Right cardiac atrium (tissue), 5 donors: ENCODE measurements at regions of chr2 and their contacts with region 1.

Region 1: DNA sequence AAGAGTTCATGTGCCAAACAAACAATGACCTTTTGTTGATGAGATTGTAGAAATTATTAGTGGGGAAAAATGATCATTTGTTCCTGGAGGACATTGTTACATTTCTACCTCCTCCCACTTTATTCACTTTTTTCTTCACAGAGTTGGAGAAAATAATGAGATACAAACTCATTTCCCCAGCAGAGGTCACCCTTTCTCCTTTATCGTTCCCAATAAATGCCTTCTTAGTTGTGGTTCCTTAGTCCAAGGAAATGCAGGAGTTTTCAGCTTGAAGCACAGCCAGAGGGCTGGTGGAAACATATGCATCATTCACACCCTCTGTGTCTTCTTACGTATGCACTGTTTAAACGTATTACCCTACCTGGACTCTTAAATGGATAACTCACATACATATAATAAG is 108.8 kb downstream of the SLC4A3 start:
- DNase-seq: no peak
- ATAC-seq: peak; percentile 60 to 65
- H3K4me3 ChIP-seq: no peak overlapping the region
- H3K27ac ChIP-seq: no peak overlapping the region
- H3K4me1 ChIP-seq: no peaks in the 10 kb centered on the region
- H3K27me3 ChIP-seq: no peaks in the 10 kb centered on the region

Region 2: GRCh38 chr2:219829667-219830352 is 93.6 kb after region 1 on chr2:
- intact Hi-C with region 1: loop called in 3 of 4 experiments (anchors 5 to 10 kb)
- DNase-seq: no peak
- ATAC-seq: no peak
- H3K4me3 ChIP-seq: no peak overlapping the region
- H3K27ac ChIP-seq: no peak overlapping the region
- H3K4me1 ChIP-seq: no peaks in the 10 kb centered on the region
- H3K27me3 ChIP-seq: no peaks in the 10 kb centered on the region

Region 3: GRCh38 chr2:219836647-219837177 is 100.5 kb after region 1 on chr2:
- intact Hi-C with region 1: loop called (anchors 2 to 10 kb)
- DNase-seq: no peak
- ATAC-seq: no peak
- H3K4me3 ChIP-seq: no peak overlapping the region
- H3K27ac ChIP-seq: no peak overlapping the region
- H3K4me1 ChIP-seq: no peaks in the 10 kb centered on the region
- H3K27me3 ChIP-seq: no peaks in the 10 kb centered on the region